ENCODE measurements at regions of chr7 and their contacts with region 1.

Region 1: GRCh38 chr7:93890464-93891068 is at the start of gene TFPI2:
- H3K4me3 ChIP-seq: peak within 1 kb of the TSS; percentile 84
- H3K27ac ChIP-seq: peak within 1 kb of the TSS; percentile 26; the same call in 1 of the 2 replicates
- H3K4me1 ChIP-seq: no peaks in the 10 kb centered on the region
- CTCF ChIP-seq: peak; percentile 68

Region 2: GRCh38 chr7:93921607-93922566 is 31.3 kb after region 1 on chr7 and contains the start of gene GNG11:
- CTCF ChIA-PET with region 1: interaction called, 3 read pairs
- POLR2A ChIA-PET with region 1: interaction called, 14 read pairs
- H3K4me3 ChIP-seq: peak within 1 kb of the TSS; percentile 63
- H3K27ac ChIP-seq: peak within 1 kb of the TSS; percentile 93
- H3K4me1 ChIP-seq: peaks cover 12% of the 10 kb centered on the region
- CTCF ChIP-seq: peak; percentile 57; the same call in 1 of the 2 replicates